ENCODE measurements at regions of chr3 and their contacts with region 1.

Region 1: GRCh38 chr3:7876741-7877297 is 624.8 kb upstream of the LMCD1 start:
- DNase-seq: peak; percentile 16 to 89 (median 40)
- ATAC-seq: peak; percentile 92
- H3K4me3 ChIP-seq: no peak overlapping the region
- H3K4me3 Mint-ChIP-seq: peak overlapping the region; percentile 64
- H3K27ac ChIP-seq: peak overlapping the region in 1 of 2 donors; percentile 8
- H3K27ac Mint-ChIP-seq: peak overlapping the region; percentile 85
- H3K4me1 ChIP-seq: peaks cover 17% of the 10 kb centered on the region
- H3K4me1 Mint-ChIP-seq: peaks cover 65% of the 10 kb centered on the region
- H3K27me3 ChIP-seq: no peaks in the 10 kb centered on the region
- H3K27me3 Mint-ChIP-seq: no peaks in the 10 kb centered on the region
- CTCF ChIP-seq: no peak

Region 2: GRCh38 chr3:8359133-8359532 is 482.3 kb after region 1 on chr3:
- CTCF ChIA-PET with region 1: no interaction called
- POLR2A ChIA-PET with region 1: interaction called, 3 read pairs
- intact Hi-C with region 1: loop called in 1 of 2 experiments (anchors 10 kb)
- DNase-seq: no peak
- ATAC-seq: no peak
- H3K4me3 ChIP-seq: no peak overlapping the region
- H3K4me3 Mint-ChIP-seq: peak overlapping the region; percentile 18
- H3K27ac ChIP-seq: no peak overlapping the region
- H3K27ac Mint-ChIP-seq: peak overlapping the region; percentile 89
- H3K4me1 ChIP-seq: peaks cover 36% of the 10 kb centered on the region
- H3K4me1 Mint-ChIP-seq: peaks cover 53% of the 10 kb centered on the region
- H3K27me3 ChIP-seq: no peaks in the 10 kb centered on the region
- H3K27me3 Mint-ChIP-seq: no peaks in the 10 kb centered on the region
- CTCF ChIP-seq: no peak

Region 3: DNA sequence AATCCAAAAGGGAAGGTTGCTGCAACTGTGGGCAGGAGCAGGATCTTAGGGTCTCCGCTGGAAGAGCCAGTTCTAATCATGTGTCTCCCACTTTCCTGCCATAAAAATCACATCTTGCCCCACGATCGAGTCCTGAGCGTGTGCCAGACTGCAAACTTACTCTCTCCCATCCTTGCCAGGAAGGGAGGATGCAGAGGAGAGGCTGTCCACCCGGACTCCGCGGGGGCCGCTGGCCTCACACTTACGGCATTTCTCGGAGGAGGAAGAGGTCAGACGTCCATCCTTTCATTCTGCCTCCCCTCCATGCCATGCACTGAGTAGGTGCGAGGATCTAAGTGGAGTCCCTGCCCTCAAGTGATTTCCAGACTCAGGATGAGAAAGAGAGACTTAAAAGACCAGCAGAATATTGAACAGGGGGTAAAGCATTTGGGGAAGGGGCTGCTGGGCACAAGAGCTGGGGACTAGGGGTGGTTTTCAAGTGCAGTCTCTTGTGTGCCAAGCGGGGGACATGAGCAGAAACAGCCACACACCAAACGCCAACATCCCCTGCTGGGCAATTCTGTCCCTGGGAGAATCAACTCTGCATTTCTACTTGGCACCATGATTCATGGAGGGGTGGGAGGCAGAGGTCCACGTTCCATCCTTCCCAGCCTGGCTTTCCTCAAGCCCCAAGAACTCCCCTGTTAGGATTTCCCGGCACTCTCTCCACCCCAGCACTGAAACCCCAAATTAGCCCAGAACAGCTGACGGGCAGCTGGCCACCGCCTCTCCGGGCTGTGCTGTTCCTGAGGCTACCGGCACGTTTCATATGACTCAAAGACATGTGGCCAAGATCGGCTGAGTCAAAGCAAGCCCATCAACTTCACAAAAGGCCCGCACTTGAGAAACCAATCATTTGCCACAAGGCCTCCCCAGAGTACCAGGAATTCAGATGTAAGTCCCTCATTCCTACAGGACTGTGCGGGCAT is 881.0 kb after region 1 on chr3:
- CTCF ChIA-PET with region 1: no interaction called
- POLR2A ChIA-PET with region 1: no interaction called
- intact Hi-C with region 1: no loop called
- DNase-seq: no peak
- ATAC-seq: no peak
- H3K4me3 ChIP-seq: no peak overlapping the region
- H3K4me3 Mint-ChIP-seq: no peak overlapping the region
- H3K27ac ChIP-seq: no peak overlapping the region
- H3K27ac Mint-ChIP-seq: no peak overlapping the region
- H3K4me1 ChIP-seq: no peaks in the 10 kb centered on the region
- H3K4me1 Mint-ChIP-seq: no peaks in the 10 kb centered on the region
- H3K27me3 ChIP-seq: no peaks in the 10 kb centered on the region
- H3K27me3 Mint-ChIP-seq: peaks cover 5% of the 10 kb centered on the region
- CTCF ChIP-seq: no peak